Activated CD4-positive, alpha-beta memory T cell treated with anti-CD3 and anti-CD28 coated beads for 36 hours (primary cell): ENCODE measurements at regions of chr4 and their contacts with region 1.

Region 1: GRCh38 chr4:139177868-139178611 is 1.0 kb upstream of the ELF2 start:
- DNase-seq: peak; percentile 95
- H3K4me3 Mint-ChIP-seq: peak overlapping the region; percentile 80
- H3K27ac Mint-ChIP-seq: peak overlapping the region; percentile 78
- H3K4me1 Mint-ChIP-seq: peaks cover 22% of the 10 kb centered on the region
- H3K27me3 Mint-ChIP-seq: peaks cover 4% of the 10 kb centered on the region

Region 2: GRCh38 chr4:139015269-139015947 is 162.6 kb before region 1 on chr4 and contains the start of gene NOCT:
- CTCF ChIA-PET with region 1: no interaction called
- POLR2A ChIA-PET with region 1: interaction called, 3 read pairs
- intact Hi-C with region 1: loop called (anchors 1 kb)
- DNase-seq: peak; percentile 97
- H3K4me3 Mint-ChIP-seq: peak within 1 kb of the TSS; percentile 89
- H3K27ac Mint-ChIP-seq: peak within 1 kb of the TSS; percentile 94
- H3K4me1 Mint-ChIP-seq: peaks cover 45% of the 10 kb centered on the region
- H3K27me3 Mint-ChIP-seq: no peaks in the 10 kb centered on the region
- total RNA-seq, gene NOCT: 12.2 to 14.3 TPM

Region 3: DNA sequence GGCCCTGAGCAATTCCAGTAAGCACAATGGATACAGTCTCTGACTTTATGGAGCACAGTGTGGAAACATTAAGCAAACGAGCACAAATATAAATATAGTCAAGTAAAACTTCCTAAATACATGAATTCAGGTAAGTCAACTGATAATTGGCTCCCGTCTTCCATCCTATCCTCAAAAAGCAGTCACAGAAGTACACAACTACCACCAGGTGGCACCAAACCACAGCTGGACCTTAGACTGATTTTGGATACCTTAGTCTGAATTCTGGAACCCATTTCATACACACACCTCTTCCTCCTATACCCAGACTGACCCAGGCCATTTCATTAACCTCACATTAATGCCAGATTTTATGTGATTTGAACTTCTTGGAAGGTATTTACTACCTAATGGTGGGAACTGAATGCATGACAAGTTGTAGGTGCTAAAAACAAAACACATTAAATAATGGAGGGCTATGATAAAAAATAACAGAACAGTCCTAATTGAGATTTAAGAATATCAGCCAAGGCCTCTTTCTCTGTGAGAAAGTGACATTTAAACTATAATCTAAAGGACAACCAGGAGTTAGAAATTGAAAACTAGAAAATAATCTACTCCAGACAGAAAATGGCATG is 78.6 kb before region 1 on chr4:
- CTCF ChIA-PET with region 1: interaction called, 7 read pairs
- POLR2A ChIA-PET with region 1: interaction called, 5 read pairs
- intact Hi-C with region 1: loop called (anchors 2 kb)
- DNase-seq: peak; percentile 80
- H3K4me3 Mint-ChIP-seq: no peak overlapping the region
- H3K27ac Mint-ChIP-seq: no peak overlapping the region
- H3K4me1 Mint-ChIP-seq: no peaks in the 10 kb centered on the region
- H3K27me3 Mint-ChIP-seq: no peaks in the 10 kb centered on the region

Region 4: DNA sequence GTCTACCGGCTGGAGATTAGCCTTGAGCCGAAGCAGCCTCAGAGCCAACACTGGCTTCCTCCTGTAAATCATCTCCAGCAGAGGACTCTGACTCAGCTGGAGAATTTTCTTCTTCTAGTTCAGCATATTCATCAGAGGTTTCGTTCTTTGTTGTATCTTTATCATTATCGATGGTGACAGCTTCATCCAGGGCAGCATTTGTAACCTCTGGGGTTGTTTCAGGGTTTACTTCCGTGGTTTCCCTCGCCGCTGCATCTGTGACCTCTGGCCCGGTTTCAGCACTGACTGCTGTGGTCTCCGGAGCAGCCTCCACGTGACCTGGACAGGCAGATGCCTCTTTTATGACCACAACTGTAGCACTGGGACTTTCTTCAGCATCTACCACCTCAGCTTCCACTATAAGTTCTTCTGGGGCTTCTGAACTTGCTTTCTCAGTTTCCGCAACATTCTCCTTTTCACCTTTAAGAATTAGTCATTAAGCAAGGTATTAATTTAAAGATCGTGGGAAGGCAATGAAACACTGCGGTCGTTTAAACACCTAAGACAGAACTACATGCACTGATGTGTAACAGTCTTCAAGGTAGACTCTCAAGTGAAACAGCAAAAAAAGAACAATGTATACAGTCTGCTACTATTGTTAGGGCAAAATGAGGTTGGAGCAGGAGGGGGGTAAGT is 88.7 kb after region 1 on chr4:
- CTCF ChIA-PET with region 1: interaction called, 3 read pairs
- POLR2A ChIA-PET with region 1: interaction called, 11 read pairs
- intact Hi-C with region 1: loop called (anchors 1 kb)
- DNase-seq: peak; percentile 94
- H3K4me3 Mint-ChIP-seq: peak overlapping the region; percentile 28
- H3K27ac Mint-ChIP-seq: peak overlapping the region; percentile 84
- H3K4me1 Mint-ChIP-seq: peaks cover 19% of the 10 kb centered on the region
- H3K27me3 Mint-ChIP-seq: peaks cover 1% of the 10 kb centered on the region

Region 5: DNA sequence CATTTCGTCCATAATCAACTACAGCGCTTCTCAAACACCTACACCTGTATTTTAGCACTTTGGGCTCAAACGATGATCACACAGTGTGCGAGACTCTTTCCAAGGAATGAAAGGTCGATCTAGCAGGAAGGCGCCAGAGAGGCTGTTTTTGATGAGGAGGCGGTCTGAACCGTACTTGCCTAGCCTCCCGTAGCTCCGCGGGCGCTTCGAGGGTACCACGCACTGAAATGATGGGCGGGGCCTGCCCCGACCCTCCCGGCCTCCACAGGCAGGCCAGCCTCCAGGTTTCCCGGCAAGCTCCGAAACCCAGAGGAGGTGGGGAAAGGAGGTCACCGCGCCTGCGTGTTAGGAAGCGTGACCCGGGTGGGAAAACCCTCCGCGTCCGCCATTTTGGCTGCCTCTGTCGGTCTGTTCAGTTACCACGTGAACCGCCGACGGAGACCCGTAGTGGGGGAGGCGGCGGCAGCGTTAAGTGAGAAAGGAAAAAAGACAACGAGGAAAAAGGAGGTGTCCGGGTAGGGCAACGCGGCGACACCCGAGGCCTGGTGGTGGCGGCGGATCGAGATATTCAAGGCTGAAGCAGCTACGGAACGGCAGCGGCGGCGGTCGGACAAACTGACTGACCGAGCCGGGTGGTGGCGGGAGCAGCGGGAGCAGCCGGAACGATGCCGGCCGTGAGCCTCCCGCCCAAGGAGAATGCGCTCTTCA is 123.2 kb after region 1 on chr4 and contains the start of gene NAA15:
- CTCF ChIA-PET with region 1: interaction called, 16 read pairs
- POLR2A ChIA-PET with region 1: interaction called, 18 read pairs
- intact Hi-C with region 1: loop called (anchors 1 kb)
- DNase-seq: peak; percentile 99
- H3K4me3 Mint-ChIP-seq: peak within 1 kb of the TSS; percentile 100
- H3K27ac Mint-ChIP-seq: peak within 1 kb of the TSS; percentile 100
- H3K4me1 Mint-ChIP-seq: peaks cover 51% of the 10 kb centered on the region
- H3K27me3 Mint-ChIP-seq: no peaks in the 10 kb centered on the region
- total RNA-seq, gene NAA15: 91.2 to 95.8 TPM